ENCODE measurements at regions of chr2 and their contacts with region 1.

Region 1: GRCh38 chr2:11583840-11584524 is 50.1 kb downstream of the GREB1 start:
- DNase-seq: peak; percentile 68
- H3K4me3 Mint-ChIP-seq: no peak overlapping the region
- H3K27ac Mint-ChIP-seq: no peak overlapping the region
- H3K4me1 Mint-ChIP-seq: peaks cover 3% of the 10 kb centered on the region
- H3K27me3 Mint-ChIP-seq: peaks cover 3% of the 10 kb centered on the region

Region 2: DNA sequence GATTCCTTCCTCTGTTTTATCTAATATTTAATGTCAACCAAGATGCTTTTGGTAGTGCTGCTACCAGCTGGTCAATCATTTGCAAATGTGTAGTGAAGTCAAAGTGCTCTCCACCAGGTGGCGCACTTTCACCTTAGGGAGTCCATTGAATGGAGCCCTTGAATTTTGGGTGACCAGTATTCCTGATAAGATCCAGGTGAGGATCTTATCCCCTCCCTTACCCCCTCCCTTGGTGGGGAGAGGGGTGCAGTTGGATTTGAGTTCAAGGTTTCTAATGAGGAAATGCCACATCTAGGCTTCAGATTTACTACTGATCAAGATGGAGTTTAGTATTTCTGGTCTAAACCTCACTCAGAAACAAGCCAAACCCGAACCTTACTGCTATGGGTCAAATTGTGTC is 106.0 kb before region 1 on chr2:
- CTCF ChIA-PET with region 1: interaction called, 60 read pairs
- POLR2A ChIA-PET with region 1: interaction called, 4 read pairs
- DNase-seq: peak; percentile 83
- H3K4me3 Mint-ChIP-seq: no peak overlapping the region
- H3K27ac Mint-ChIP-seq: no peak overlapping the region
- H3K4me1 Mint-ChIP-seq: peaks cover under 1% of the 10 kb centered on the region
- H3K27me3 Mint-ChIP-seq: peaks cover 33% of the 10 kb centered on the region

Region 3: GRCh38 chr2:11563306-11563705 is 20.7 kb before region 1 on chr2:
- CTCF ChIA-PET with region 1: interaction called, 15 read pairs
- POLR2A ChIA-PET with region 1: no interaction called
- DNase-seq: no peak
- H3K4me3 Mint-ChIP-seq: no peak overlapping the region
- H3K27ac Mint-ChIP-seq: no peak overlapping the region
- H3K4me1 Mint-ChIP-seq: no peaks in the 10 kb centered on the region
- H3K27me3 Mint-ChIP-seq: peaks cover 5% of the 10 kb centered on the region

Region 4: DNA sequence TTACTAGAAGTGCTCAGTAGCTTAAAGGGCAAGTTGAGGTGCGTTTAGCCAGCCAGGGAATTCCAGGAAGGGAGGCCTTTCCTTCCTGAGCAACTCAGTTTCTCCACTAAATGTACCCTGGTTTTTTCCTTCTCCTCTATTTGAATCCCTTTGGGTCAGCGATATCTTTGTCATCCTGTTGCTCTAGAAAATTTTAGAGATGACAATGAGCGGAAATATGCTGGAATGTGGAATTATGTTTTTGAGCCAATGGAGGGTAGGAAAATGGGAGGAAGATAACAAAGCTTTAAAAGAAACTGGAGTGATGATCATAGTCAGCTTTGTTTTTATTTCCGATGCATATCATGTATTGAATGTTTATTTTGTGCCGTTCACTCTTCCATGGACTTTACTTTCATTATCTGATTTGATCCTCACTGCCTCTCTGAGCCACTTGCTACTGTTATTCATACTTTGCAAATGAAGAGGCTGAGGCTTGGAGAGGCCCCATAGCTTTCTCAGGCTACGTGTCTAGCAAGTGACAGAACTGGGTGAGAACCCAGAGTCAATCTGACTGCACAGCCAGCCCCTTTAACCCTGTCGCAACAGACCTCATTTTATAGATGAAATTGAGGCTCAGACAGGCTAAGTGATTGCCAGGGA is 18.7 kb after region 1 on chr2:
- CTCF ChIA-PET with region 1: interaction called, 12 read pairs
- POLR2A ChIA-PET with region 1: no interaction called
- DNase-seq: no peak
- H3K4me3 Mint-ChIP-seq: no peak overlapping the region
- H3K27ac Mint-ChIP-seq: no peak overlapping the region
- H3K4me1 Mint-ChIP-seq: no peaks in the 10 kb centered on the region
- H3K27me3 Mint-ChIP-seq: peaks cover 3% of the 10 kb centered on the region